Gastrocnemius medialis (tissue), 4 donors: ENCODE measurements at regions of chr3 and their contacts with region 1.

Region 1: GRCh38 chr3:81947359-81947758 is 185.9 kb upstream of the GBE1 start:
- DNase-seq: no peak
- ATAC-seq: no peak
- H3K4me3 ChIP-seq: no peak overlapping the region
- H3K27ac ChIP-seq: no peak overlapping the region
- H3K4me1 ChIP-seq: no peaks in the 10 kb centered on the region
- H3K27me3 ChIP-seq: no peaks in the 10 kb centered on the region
- CTCF ChIP-seq: no peak
- POLR2A ChIP-seq: no peak

Region 2: DNA sequence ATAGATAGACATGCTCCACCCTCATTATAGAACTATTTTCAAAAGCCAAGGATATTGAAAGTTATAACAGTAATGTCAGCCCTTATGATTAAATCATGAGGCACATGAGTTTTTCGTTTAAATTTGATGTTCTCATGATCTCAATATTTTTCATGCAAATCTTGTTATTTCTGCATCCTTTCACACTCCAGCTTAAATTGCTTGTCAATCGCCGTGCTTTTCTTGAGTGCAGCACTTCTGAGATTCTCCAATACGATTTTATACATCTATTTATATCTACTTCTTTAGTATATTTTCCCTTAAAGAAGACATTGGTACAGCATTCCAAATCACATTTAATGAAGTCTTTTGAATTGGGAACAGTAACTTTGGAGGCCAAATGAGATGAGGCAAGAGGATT is 14.7 kb before region 1 on chr3:
- in situ Hi-C with region 1: no loop called
- intact Hi-C with region 1: loop called (anchors 1 kb)
- DNase-seq: no peak
- ATAC-seq: no peak
- H3K4me3 ChIP-seq: no peak overlapping the region
- H3K27ac ChIP-seq: no peak overlapping the region
- H3K4me1 ChIP-seq: no peaks in the 10 kb centered on the region
- H3K27me3 ChIP-seq: no peaks in the 10 kb centered on the region
- CTCF ChIP-seq: no peak
- POLR2A ChIP-seq: no peak